GM12878 (cell line): ENCODE measurements at regions of chr2 and their contacts with region 1.

Region 1: GRCh38 chr2:136233298-136233697 is 115.3 kb upstream of the CXCR4 start:
- DNase-seq: no peak
- ATAC-seq: peak; percentile 20; the same call in 1 of the 3 replicates
- H3K4me3 ChIP-seq: no peak overlapping the region
- H3K27ac ChIP-seq: no peak overlapping the region
- H3K4me1 ChIP-seq: peaks cover 6% of the 10 kb centered on the region; the same call in 1 of the 2 replicates
- H3K27me3 ChIP-seq: no peaks in the 10 kb centered on the region; a peak in 1 of 4 replicates
- CTCF ChIP-seq: no peak
- EP300 ChIP-seq: no peak
- POLR2A ChIP-seq: no peak
- RAD21 ChIP-seq: no peak

Region 2: DNA sequence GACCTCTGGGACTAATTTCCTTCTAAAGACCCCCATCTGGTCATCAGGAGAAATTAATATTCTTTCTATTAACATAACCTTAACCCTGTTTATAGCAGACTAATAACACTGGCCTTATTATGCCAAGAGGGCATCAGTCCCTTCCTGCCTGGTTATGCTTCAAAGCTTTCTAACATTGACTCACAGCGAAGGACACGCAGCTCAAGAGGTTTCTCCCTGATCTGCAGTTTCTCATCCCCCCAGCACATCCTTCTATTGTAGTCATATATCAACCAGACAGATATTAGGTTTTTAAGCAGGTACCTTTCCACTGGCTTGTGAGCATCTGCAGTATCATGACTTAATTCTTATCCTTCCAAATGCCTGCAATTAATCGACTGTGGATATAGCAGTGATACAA is 15.3 kb before region 1 on chr2:
- CTCF ChIA-PET with region 1: interaction called, 23 read pairs
- POLR2A ChIA-PET with region 1: interaction called, 56 read pairs
- RAD21 ChIA-PET with region 1: interaction called, 39 read pairs
- SMC1A ChIA-PET with region 1: interaction called, 105 read pairs
- in situ Hi-C with region 1: no loop called
- intact Hi-C with region 1: no loop called
- DNase-seq: no peak
- ATAC-seq: peak; percentile 77
- H3K4me3 ChIP-seq: no peak overlapping the region
- H3K27ac ChIP-seq: no peak overlapping the region
- H3K4me1 ChIP-seq: no peaks in the 10 kb centered on the region
- H3K27me3 ChIP-seq: peaks cover 0 to 9% of the 10 kb centered on the region in 2 experiments; a peak in 1 of 4 replicates
- CTCF ChIP-seq: no peak
- EP300 ChIP-seq: peak in 1 of 2 experiments; percentile 40; a peak in 1 of 4 replicates
- POLR2A ChIP-seq: no peak
- RAD21 ChIP-seq: no peak